ENCODE measurements at regions of chr6 and their contacts with region 1.

Region 1: GRCh38 chr6:30600451-30600961 is 16.5 kb downstream of the PPP1R10 start:
- DNase-seq: no peak
- ATAC-seq: no peak
- H3K4me3 Mint-ChIP-seq: no peak overlapping the region
- H3K27ac Mint-ChIP-seq: peak overlapping the region; percentile 52 to 91 (median 76)
- H3K4me1 Mint-ChIP-seq: peaks cover 20 to 40% (median 33%) of the 10 kb centered on the region in 4 donors
- H3K27me3 Mint-ChIP-seq: no peaks in the 10 kb centered on the region

Region 2: GRCh38 chr6:30483677-30484279 is 116.7 kb before region 1 on chr6:
- POLR2A ChIA-PET with region 1: interaction called, 22 read pairs
- DNase-seq: peak in 4 of 10 donors; percentile 38 to 62 (median 54)
- ATAC-seq: no peak
- H3K4me3 Mint-ChIP-seq: no peak overlapping the region
- H3K27ac Mint-ChIP-seq: peak overlapping the region in 2 of 10 donors; percentile 19 to 23
- H3K4me1 Mint-ChIP-seq: peaks cover 21 to 38% (median 35%) of the 10 kb centered on the region in 4 donors
- H3K27me3 Mint-ChIP-seq: peaks cover 16 to 34% (median 28%) of the 10 kb centered on the region in 5 donors

Region 3: DNA sequence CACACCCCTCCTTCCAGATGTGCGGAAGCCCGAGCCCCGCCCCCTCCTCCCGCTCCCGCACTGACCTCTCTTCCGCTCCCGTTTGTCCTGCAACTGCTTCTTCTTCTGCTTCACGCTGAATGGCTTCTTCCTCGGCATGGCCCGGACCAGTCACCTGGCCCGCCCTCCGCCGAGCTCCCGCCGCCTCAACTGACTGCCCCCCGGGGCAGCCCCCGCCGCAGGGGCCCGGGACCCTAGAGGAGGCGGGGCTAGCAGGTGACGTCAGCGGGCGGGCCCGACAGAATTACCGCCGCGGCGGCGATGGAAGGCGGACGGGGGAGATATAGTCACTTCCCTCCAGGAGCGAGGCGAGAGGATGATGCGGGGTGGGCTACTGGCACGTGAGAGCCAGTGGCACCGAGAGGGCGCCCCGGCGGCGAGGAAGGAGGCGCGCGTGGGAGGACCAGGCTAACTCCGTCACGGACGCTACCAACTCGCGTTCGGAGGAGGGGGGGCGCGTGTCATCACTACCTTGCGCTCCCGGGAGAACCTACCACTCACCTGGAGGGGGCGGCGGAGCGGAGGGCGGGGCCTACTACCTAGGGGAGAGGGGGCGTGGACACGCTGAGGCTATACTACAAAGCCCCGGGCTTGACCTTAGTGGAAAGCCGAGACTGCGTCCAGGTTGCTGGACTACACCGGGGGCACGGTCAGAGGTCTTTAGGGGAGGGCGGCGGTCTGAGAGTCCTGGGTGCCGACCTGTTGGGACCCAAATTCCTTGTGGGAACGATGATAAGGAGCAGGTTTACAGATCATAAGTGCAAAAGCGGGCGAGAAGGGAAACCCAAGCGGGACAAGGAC is 44.2 kb before region 1 on chr6 and contains the start of gene GNL1:
- POLR2A ChIA-PET with region 1: interaction called, 16 read pairs
- DNase-seq: peak; percentile 97 to 100 (median 99)
- ATAC-seq: peak; percentile 86 to 87
- H3K4me3 Mint-ChIP-seq: peak within 1 kb of the TSS; percentile 87 to 100 (median 99)
- H3K27ac Mint-ChIP-seq: peak within 1 kb of the TSS; percentile 98 to 100 (median 100)
- H3K4me1 Mint-ChIP-seq: peaks cover 25 to 70% (median 56%) of the 10 kb centered on the region in 4 donors
- H3K27me3 Mint-ChIP-seq: peaks cover 0 to 2% (median 0%) of the 10 kb centered on the region in 5 donors
- polyA plus RNA-seq, gene GNL1: 24.7 to 34.1 (median 28.7) TPM

Region 4: DNA sequence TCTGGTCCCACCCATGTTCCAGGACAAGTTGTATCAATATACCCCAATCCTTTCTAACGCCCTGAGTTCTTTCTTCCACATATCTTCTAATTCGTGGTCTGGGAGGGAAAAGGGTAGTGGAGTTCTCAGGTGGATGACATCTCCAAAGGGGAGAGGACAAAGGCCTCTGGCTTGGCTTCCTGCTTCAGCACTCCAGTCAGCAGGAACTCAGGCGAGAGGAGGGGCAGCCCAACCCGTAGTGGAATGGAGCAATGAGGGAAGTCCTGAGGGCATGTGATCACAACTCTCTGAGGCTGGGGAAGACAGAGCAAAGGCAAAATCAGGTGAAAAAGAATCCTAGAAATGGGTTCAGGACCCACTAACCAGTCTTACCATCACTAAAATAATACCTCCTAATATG is 99.8 kb after region 1 on chr6:
- POLR2A ChIA-PET with region 1: no interaction called
- DNase-seq: peak in 1 of 10 donors; percentile 32
- ATAC-seq: no peak
- H3K4me3 Mint-ChIP-seq: no peak overlapping the region
- H3K27ac Mint-ChIP-seq: no peak overlapping the region
- H3K4me1 Mint-ChIP-seq: peaks cover 0 to 18% (median 5%) of the 10 kb centered on the region in 4 donors
- H3K27me3 Mint-ChIP-seq: no peaks in the 10 kb centered on the region

Region 5: GRCh38 chr6:30769088-30769852 is 168.8 kb after region 1 on chr6:
- POLR2A ChIA-PET with region 1: no interaction called
- DNase-seq: peak; percentile 26 to 75 (median 52)
- ATAC-seq: peak; percentile 79 to 88
- H3K4me3 Mint-ChIP-seq: peak overlapping the region; percentile 45 to 84 (median 72)
- H3K27ac Mint-ChIP-seq: peak overlapping the region; percentile 53 to 94 (median 86)
- H3K4me1 Mint-ChIP-seq: peaks cover 37 to 75% (median 65%) of the 10 kb centered on the region in 4 donors
- H3K27me3 Mint-ChIP-seq: no peaks in the 10 kb centered on the region